ENCODE measurements at regions of chr10 and their contacts with region 1.

Region 1: DNA sequence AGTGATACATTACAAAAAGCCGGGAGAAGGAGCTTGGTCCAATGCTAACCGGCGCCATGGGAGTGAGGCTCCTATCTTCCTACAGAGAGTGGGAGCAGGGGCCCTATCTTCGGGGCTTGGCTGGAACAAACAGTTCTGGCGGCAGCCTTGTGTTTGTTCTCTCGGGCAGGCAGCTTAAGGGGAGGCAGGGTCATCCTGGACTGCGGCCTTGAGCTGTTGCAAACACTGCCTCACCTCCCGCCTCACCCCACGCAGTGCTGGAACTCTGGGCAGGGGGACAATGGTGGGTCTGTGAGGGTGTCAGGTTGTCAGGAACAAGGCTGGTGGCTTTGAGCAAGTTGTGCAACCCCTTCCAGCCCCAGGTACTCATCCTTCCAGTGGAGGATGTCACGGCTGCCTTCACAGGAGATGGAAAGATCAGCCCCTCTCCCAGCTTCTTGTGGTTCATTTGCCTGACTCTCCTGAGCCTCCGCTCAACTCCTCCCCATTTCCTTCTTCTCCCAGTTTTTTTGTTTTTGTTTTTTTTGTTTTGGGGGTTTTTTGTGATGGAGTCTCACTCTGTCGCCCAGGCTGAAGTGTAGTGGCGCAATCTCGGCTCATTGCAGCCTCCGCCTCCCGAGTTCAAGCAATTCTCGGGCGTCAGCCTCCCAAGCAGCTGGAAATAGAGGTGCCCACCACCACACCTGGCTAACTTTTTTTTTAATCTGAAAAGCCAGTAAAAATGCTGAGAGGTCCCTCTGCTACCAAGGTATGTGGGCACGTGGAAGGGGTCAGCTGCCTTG is 57.4 kb downstream of the SPOCK2 start:
- DNase-seq: peak; percentile 97
- ATAC-seq: peak; percentile 89
- H3K4me3 ChIP-seq: peak overlapping the region; percentile 45 to 66 (median 58); a peak in 5 of 6 replicates
- H3K27ac ChIP-seq: peak overlapping the region; percentile 99
- H3K4me1 ChIP-seq: peaks cover 99% of the 10 kb centered on the region
- H3K27me3 ChIP-seq: no peaks in the 10 kb centered on the region
- CTCF ChIP-seq: peak; percentile 29; the same call in 1 of the 2 replicates
- EP300 ChIP-seq: peak; percentile 97 to 99
- POLR2A ChIP-seq: peak; percentile 65 to 82
- RAD21 ChIP-seq: peak; percentile 49; the same call in 1 of the 2 replicates

Region 2: GRCh38 chr10:71974489-71975021 is 56.4 kb before region 1 on chr10:
- CTCF ChIA-PET with region 1: no interaction called
- POLR2A ChIA-PET with region 1: interaction called, 34 read pairs
- in situ Hi-C with region 1: no loop called
- intact Hi-C with region 1: no loop called
- DNase-seq: no peak
- ATAC-seq: no peak
- H3K4me3 ChIP-seq: no peak overlapping the region
- H3K27ac ChIP-seq: peak overlapping the region; percentile 91
- H3K4me1 ChIP-seq: peaks cover 71% of the 10 kb centered on the region
- H3K27me3 ChIP-seq: no peaks in the 10 kb centered on the region
- CTCF ChIP-seq: no peak
- EP300 ChIP-seq: no peak
- POLR2A ChIP-seq: no peak
- RAD21 ChIP-seq: no peak

Region 3: GRCh38 chr10:71985542-71986250 is 45.3 kb before region 1 on chr10:
- CTCF ChIA-PET with region 1: no interaction called
- POLR2A ChIA-PET with region 1: interaction called, 20 read pairs
- in situ Hi-C with region 1: loop called (anchors 5 kb)
- intact Hi-C with region 1: loop called (anchors 2 kb)
- DNase-seq: no peak
- ATAC-seq: no peak
- H3K4me3 ChIP-seq: peak overlapping the region in 1 of 3 experiments; percentile 41; a peak in 1 of 6 replicates
- H3K27ac ChIP-seq: peak overlapping the region; percentile 88
- H3K4me1 ChIP-seq: peaks cover 86% of the 10 kb centered on the region
- H3K27me3 ChIP-seq: no peaks in the 10 kb centered on the region
- CTCF ChIP-seq: no peak
- EP300 ChIP-seq: no peak
- POLR2A ChIP-seq: no peak
- RAD21 ChIP-seq: no peak

Region 4: GRCh38 chr10:72016608-72017312 is 14.2 kb before region 1 on chr10:
- CTCF ChIA-PET with region 1: no interaction called
- POLR2A ChIA-PET with region 1: interaction called, 33 read pairs
- in situ Hi-C with region 1: no loop called
- intact Hi-C with region 1: no loop called
- DNase-seq: no peak
- ATAC-seq: peak; percentile 68
- H3K4me3 ChIP-seq: peak overlapping the region; percentile 16 to 61 (median 20); a peak in 3 of 6 replicates
- H3K27ac ChIP-seq: peak overlapping the region; percentile 39
- H3K4me1 ChIP-seq: peaks cover 66% of the 10 kb centered on the region
- H3K27me3 ChIP-seq: no peaks in the 10 kb centered on the region
- CTCF ChIP-seq: no peak
- EP300 ChIP-seq: no peak
- POLR2A ChIP-seq: no peak
- RAD21 ChIP-seq: no peak